Activated CD4-positive, alpha-beta T cell treated with anti-CD3 and anti-CD28 coated beads, Interleukin-2, amount 10 ng/mL, durations not matched to agents 24 days and 14 days (primary cell): ENCODE measurements at regions of chr1 and their contacts with region 1.

Region 1: DNA sequence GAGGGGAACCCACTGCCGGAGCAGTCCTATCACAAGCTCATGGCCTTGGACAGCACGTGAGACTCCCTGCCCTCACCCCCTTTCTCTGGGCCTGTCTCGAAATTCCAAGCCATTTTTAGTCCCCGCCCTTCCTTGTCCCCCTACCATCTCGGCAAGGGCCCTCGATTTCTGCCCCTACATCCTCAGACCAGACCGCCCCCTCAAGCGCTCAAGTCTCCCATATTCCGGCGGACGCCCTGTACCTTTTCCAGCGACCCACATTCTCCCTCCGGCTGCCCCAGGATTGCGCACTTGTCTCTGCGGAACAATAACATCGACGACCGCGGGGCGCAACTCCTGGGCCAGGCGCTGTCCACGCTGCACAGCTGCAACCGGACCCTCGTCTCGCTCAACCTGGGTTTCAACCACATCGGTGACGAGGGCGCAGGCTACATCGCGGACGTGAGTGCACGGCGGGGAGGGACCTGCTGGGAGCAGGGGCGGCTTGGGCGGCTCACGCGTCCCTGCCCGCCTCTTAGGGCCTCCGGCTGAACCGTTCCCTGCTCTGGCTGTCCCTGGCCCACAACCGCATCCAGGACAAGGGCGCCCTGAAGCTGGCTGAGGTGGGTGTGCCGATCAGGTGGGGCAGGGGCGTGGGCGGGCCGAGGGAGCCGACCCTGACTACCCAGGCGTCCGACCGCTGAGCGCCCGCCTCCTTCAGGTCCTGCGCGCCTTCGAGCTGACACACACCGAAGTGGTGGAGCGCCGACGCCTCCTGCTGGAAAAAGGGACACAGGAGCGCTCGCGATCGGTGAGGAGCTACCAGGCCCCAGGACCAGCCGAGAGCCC is 7.0 kb downstream of the LRRC71 start:
- DNase-seq: peak; percentile 92
- H3K4me3 Mint-ChIP-seq: peak overlapping the region; percentile 53
- H3K27ac Mint-ChIP-seq: no peak overlapping the region
- H3K4me1 Mint-ChIP-seq: peaks cover 23% of the 10 kb centered on the region
- H3K27me3 Mint-ChIP-seq: peaks cover 76% of the 10 kb centered on the region

Region 2: DNA sequence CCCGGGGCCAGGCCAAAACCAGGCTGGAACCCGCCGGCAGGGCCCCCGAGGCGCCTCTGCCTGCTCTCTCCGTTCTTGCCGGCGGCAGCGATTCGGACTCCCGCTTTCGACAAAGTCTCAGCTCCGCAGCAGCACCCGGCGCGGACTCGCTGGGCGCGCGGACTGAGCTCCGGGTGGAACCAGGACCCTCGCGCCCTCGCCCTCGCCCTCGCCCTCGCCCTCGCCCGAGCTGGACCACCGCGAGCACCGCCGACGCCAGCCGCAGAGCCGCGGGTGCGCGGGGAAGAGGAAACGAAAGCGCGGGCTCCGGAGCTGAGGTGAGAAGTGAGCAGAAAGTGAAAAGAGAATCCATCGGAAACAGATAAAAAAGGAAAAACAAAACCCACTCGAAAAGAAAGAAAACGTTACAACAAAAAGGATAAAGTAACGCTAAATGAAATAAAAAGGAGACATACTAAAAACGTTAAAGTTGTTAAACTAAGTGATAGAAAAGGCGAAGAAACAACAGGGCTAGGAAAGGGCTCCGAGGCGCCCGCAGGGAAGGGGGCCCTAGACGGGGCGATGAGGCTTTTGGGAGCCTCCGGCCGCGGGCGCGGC is 491.8 kb before region 1 on chr1:
- intact Hi-C with region 1: loop called (anchors 10 kb)
- DNase-seq: peak; percentile 80
- H3K4me3 Mint-ChIP-seq: peak overlapping the region; percentile 73
- H3K27ac Mint-ChIP-seq: peak overlapping the region; percentile 14
- H3K4me1 Mint-ChIP-seq: peaks cover 39% of the 10 kb centered on the region
- H3K27me3 Mint-ChIP-seq: peaks cover 87% of the 10 kb centered on the region

Region 3: DNA sequence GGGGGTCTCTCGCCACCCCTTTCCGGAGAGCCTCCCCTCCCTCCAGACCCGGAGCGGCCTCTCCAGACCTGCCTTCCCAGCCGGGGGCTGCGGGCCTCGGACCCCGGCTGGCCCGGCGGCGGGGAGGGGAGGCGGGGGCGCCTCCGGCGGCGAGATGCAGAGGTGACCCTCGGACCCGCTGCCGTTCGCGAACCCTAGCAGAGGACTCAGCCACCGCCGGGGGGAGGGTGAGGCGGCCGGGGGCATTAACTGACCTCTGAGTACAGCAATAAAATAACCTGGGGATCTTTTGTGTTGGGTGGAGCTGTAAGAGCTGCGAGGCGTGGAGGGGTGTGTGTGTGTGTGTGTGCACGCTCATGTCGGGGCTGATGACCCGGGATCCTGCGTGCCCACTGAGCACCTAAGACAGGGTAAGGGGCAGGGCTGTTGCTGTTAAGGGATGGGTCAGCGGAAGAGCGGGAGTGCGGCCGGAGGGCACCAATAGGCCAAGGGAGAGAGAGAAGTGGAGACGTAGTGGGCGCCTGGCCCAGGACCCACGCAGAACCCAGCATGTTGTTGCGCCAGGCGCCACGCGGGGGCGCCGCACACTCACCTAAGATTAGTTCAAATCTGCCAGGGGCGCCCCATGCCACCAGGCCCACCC is 301.9 kb before region 1 on chr1:
- intact Hi-C with region 1: loop called (anchors 10 kb)
- DNase-seq: peak; percentile 90
- H3K4me3 Mint-ChIP-seq: peak overlapping the region; percentile 84
- H3K27ac Mint-ChIP-seq: peak overlapping the region; percentile 50
- H3K4me1 Mint-ChIP-seq: peaks cover 9% of the 10 kb centered on the region
- H3K27me3 Mint-ChIP-seq: peaks cover 60% of the 10 kb centered on the region

Region 4: DNA sequence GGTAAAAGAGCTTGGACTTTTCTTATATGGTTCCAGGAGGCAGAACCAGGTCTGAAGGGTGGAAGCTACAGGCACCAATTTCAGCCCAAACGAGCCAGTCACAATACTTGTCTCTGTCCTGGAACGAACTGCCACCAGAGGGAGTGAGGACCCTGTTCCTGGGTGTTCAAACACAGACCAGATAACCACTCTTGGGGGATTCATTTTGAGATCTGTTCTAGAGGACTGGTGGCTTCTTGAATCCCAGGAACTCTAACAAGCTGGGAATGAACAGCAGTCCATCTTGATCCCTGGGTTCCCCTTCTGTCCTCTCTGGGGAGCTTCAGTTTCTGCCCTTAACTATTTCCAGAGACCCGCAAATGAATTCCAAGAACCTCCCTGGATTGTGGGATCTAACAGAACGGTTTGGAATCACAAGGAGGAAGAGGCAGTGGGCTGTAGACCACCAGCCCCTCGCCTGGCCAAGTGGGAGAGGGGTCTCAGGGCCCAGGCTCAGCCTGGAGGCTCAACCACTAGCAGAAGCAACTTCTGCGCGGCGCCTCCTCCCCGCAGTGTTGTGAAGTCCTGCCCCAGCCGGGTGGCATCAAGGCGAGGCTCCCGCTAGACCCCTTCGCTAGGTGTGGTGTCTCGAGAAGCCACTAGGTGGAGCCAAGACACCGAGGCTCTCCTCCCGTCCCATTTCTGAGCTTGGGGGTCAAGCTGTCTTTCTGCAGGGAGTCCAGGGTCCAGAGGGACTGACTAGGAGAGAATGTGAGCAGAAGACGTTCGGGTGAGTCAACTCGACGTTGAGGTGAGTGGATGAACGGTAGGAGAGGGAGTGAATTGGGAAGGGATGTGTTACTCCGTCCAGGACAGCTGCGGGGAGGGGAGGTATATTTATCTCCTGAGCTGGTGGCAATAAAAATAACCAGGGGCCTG is 238.1 kb before region 1 on chr1:
- intact Hi-C with region 1: loop called (anchors 2 kb)
- DNase-seq: peak; percentile 92
- H3K4me3 Mint-ChIP-seq: peak overlapping the region; percentile 68
- H3K27ac Mint-ChIP-seq: no peak overlapping the region
- H3K4me1 Mint-ChIP-seq: peaks cover 28% of the 10 kb centered on the region
- H3K27me3 Mint-ChIP-seq: peaks cover 60% of the 10 kb centered on the region

Region 5: DNA sequence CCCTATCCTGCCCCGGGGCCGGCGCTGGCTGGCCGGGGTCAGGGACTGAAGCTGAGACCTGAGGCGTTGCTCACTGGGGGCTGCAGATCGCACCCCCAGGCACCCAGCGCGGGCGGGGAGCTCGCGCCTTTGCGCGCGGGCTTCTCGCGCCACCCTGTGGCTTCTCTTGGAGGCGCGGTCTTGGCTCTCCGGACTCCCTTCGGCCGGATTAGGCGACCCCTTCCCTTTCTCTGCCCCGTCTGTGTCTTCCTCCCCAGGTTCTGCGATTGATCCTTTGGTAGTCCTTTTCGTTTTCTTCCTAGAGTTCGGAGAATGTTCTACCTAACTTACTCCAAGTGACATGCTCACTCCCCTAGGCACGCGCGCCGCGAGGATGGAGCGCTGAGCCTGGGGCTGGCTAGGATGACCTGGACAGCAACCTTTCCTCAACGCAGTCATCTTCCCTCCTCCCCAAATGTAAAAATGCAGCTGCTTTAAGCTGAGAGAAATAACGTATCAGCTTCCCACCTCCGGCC is 67.3 kb before region 1 on chr1:
- intact Hi-C with region 1: loop called (anchors 10 kb)
- DNase-seq: peak; percentile 91
- H3K4me3 Mint-ChIP-seq: peak overlapping the region; percentile 80
- H3K27ac Mint-ChIP-seq: peak overlapping the region; percentile 18
- H3K4me1 Mint-ChIP-seq: peaks cover 51% of the 10 kb centered on the region
- H3K27me3 Mint-ChIP-seq: peaks cover 25% of the 10 kb centered on the region

Region 6: DNA sequence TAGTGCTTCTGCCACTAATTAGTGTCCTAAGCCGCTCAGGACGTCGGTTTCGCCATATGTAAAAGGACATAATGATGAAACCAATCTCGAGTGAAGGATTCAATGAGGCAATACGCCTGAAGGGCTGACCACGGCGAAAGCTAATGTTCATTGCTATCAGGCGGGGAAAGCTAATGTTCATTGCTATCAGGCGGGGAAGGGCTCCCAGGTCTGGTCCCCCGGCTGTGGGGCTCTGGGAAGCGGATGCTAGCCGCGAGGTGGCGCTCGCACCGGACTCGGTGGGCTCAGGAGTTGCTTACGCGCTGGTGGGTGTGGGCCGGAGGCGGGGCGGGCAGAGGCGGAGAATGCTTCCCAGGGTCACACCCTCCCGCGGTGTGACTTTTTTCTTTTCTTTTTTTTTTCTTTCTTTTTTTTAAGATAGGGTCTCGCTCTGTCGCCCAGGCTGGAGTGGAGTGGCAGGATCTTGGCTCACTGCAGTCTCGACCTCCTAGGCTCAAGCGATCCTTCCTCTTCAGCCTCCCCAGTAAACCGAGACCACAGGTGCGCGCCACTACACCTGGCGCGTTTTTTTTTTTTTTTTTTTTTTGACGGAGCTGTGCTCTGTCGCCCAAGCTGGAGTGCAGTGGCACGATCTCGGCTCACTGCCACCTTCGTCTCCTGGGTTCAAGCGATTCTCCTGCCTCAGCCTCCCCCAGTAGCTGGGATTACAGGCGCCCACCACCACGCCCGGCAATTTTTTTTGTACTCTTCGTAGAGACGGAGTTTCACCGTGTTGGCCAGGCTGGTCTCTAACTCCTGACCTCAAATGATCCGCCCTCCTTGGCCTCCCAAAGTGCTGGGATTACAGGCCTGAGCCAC is 35.0 kb before region 1 on chr1:
- intact Hi-C with region 1: loop called (anchors 1 kb)
- DNase-seq: peak; percentile 96
- H3K4me3 Mint-ChIP-seq: peak overlapping the region; percentile 66
- H3K27ac Mint-ChIP-seq: no peak overlapping the region
- H3K4me1 Mint-ChIP-seq: peaks cover 13% of the 10 kb centered on the region
- H3K27me3 Mint-ChIP-seq: peaks cover 36% of the 10 kb centered on the region